CD14-positive monocyte (primary cell): ENCODE measurements at regions of chr16 and their contacts with region 1.

Region 1: DNA sequence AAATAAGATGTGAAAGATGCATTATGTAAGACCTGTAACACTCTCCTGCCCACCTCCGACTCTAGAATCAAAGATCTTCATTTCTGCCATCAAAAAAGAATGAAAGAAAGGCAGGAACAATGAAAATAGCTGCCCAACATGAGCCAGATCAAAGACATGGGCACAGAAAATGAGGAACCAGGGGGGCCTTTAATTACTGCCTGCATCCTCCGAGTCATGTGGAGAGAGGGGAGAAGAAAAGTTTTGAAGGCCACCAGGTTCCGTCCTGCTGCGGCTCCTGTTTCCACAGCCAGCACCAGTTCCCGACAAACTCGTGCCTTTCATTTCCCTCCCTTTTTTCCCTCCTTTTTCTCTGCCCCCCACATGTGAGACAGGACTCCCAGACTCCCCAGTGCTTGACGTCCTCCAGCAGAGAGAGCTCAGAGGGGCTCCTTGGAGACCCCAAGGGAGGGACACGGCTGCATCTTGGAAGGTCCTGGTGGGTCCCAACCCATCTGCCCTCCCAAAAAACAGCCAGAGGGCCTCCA is 168.4 kb downstream of the ZNF423 start:
- DNase-seq: no peak
- H3K4me3 ChIP-seq: no peak overlapping the region
- H3K4me3 Mint-ChIP-seq: peak overlapping the region in 1 of 2 donors; percentile 6
- H3K27ac ChIP-seq: no peak overlapping the region
- H3K27ac Mint-ChIP-seq: no peak overlapping the region
- H3K4me1 ChIP-seq: no peaks in the 10 kb centered on the region
- H3K4me1 Mint-ChIP-seq: no peaks in the 10 kb centered on the region
- H3K27me3 ChIP-seq: peaks cover 0 to 9% of the 10 kb centered on the region in 2 donors
- H3K27me3 Mint-ChIP-seq: peaks cover 10 to 14% (median 11%) of the 10 kb centered on the region in 3 donors
- CTCF ChIP-seq: no peak

Region 2: DNA sequence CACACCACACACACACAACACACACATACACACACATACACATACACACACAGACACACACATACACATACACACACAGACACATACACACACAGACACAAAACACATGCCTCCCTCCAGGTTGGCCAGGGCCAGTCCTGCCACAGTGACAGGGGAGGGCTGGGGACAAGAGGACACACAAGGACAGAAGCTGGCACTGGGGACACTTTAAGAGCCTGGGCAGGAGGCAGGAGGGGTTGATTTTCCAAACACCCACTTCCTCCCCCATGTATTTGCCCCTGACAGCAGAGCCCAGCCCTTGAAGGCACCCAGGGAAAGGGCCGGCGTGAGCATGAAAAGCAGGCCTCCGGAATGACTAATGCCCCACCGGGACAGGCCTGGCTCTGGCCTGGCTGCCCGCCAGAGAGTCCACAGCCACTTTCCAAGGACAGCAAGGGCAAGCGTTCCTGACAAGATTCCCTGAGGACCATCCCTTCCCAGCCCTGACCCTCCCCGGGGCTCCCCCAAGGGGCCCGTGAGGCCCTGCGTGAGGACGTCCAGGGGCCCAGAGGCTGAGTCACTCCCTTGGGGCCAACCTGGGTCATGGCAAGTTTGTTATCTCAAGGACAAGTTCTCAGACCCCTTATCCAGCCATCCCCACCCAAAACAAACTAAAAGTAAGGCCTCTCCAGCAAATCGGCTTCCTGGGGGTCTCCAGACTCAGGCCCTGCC is 67.2 kb before region 1 on chr16:
- intact Hi-C with region 1: no loop called
- DNase-seq: no peak
- H3K4me3 ChIP-seq: no peak overlapping the region
- H3K4me3 Mint-ChIP-seq: no peak overlapping the region
- H3K27ac ChIP-seq: no peak overlapping the region
- H3K27ac Mint-ChIP-seq: no peak overlapping the region
- H3K4me1 ChIP-seq: no peaks in the 10 kb centered on the region
- H3K4me1 Mint-ChIP-seq: no peaks in the 10 kb centered on the region
- H3K27me3 ChIP-seq: no peaks in the 10 kb centered on the region
- H3K27me3 Mint-ChIP-seq: no peaks in the 10 kb centered on the region
- CTCF ChIP-seq: no peak

Region 3: GRCh38 chr16:49665482-49666230 is 21.9 kb before region 1 on chr16:
- intact Hi-C with region 1: loop called in 1 of 2 experiments (anchors 2 kb)
- DNase-seq: no peak
- H3K4me3 ChIP-seq: no peak overlapping the region
- H3K4me3 Mint-ChIP-seq: no peak overlapping the region
- H3K27ac ChIP-seq: no peak overlapping the region
- H3K27ac Mint-ChIP-seq: no peak overlapping the region
- H3K4me1 ChIP-seq: no peaks in the 10 kb centered on the region
- H3K4me1 Mint-ChIP-seq: no peaks in the 10 kb centered on the region
- H3K27me3 ChIP-seq: no peaks in the 10 kb centered on the region
- H3K27me3 Mint-ChIP-seq: peaks cover 0 to 4% (median 3%) of the 10 kb centered on the region in 3 donors
- CTCF ChIP-seq: no peak

Region 4: DNA sequence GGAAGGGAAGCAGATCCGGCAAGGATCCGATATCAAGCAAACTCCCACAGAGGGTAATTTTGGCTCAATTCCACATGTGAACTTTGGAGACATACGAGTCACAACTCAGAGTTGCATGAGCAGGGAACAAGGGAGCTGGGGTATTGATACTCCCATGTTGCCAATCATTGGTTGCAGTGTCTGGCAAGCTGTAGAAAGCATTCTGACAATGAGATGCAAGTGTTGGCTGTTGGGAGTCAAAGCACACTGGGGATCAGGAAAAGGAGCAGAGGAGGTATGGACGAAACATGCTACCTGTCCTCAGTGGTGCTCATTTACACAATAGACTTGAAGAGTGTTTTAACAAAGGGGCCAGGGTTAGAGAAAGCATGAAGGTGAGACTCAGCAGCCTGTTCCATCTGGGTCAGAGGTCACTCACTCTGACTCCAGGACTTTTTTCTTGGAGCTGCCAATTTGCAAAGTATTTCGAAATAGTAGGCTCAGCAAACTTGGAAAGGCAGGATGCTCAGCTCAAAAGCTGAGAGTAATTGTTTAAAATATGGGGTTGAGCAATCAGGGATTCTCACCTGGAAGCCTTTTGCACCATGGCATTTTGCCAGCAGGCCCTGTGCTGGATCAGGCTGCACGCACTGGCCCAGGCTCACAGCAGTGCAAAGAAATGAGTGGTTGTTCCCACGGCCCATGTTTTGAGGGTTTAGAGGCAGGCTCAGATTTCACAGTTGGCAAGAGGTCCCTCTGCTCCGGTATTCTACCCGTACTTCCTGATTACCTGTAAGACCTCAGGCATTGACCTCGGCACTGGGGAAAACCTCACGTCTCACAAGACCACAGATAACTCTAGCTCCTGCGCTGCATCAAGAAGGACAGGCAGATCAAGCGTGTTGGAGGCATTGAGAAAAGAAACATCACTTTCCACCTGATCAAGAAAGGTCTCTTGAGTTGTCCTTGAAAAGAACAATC is 843.0 kb after region 1 on chr16:
- intact Hi-C with region 1: no loop called
- DNase-seq: no peak
- H3K4me3 ChIP-seq: no peak overlapping the region
- H3K4me3 Mint-ChIP-seq: peak overlapping the region; percentile 14 to 22
- H3K27ac ChIP-seq: no peak overlapping the region
- H3K27ac Mint-ChIP-seq: no peak overlapping the region
- H3K4me1 ChIP-seq: no peaks in the 10 kb centered on the region
- H3K4me1 Mint-ChIP-seq: no peaks in the 10 kb centered on the region
- H3K27me3 ChIP-seq: no peaks in the 10 kb centered on the region
- H3K27me3 Mint-ChIP-seq: peaks cover 3 to 13% (median 13%) of the 10 kb centered on the region in 3 donors
- CTCF ChIP-seq: no peak